GM23248 (cell line): ENCODE measurements at regions of chr12 and their contacts with region 1.

Region 1: GRCh38 chr12:50504798-50505385 is at the start of gene DIP2B:
- DNase-seq: peak; percentile 96
- H3K4me3 ChIP-seq: peak within 1 kb of the TSS; percentile 83
- H3K27ac ChIP-seq: peak within 1 kb of the TSS; percentile 67
- H3K4me1 ChIP-seq: peaks cover 23% of the 10 kb centered on the region
- H3K27me3 ChIP-seq: no peaks in the 10 kb centered on the region
- total RNA-seq, gene DIP2B: 17.9 and 19.5 TPM in 2 replicates

Region 2: GRCh38 chr12:50132505-50133135 is 372.3 kb before region 1 on chr12:
- in situ Hi-C with region 1: no loop called
- DNase-seq: peak; percentile 59
- H3K4me3 ChIP-seq: no peak overlapping the region
- H3K27ac ChIP-seq: no peak overlapping the region
- H3K4me1 ChIP-seq: peaks cover 8% of the 10 kb centered on the region; the same call in 1 of the 2 replicates
- H3K27me3 ChIP-seq: no peaks in the 10 kb centered on the region

Region 3: GRCh38 chr12:50271280-50272247 is 233.3 kb before region 1 on chr12:
- in situ Hi-C with region 1: no loop called
- DNase-seq: peak; percentile 55
- H3K4me3 ChIP-seq: peak overlapping the region; percentile 54
- H3K27ac ChIP-seq: peak overlapping the region; percentile 52
- H3K4me1 ChIP-seq: peaks cover 12% of the 10 kb centered on the region
- H3K27me3 ChIP-seq: no peaks in the 10 kb centered on the region

Region 4: DNA sequence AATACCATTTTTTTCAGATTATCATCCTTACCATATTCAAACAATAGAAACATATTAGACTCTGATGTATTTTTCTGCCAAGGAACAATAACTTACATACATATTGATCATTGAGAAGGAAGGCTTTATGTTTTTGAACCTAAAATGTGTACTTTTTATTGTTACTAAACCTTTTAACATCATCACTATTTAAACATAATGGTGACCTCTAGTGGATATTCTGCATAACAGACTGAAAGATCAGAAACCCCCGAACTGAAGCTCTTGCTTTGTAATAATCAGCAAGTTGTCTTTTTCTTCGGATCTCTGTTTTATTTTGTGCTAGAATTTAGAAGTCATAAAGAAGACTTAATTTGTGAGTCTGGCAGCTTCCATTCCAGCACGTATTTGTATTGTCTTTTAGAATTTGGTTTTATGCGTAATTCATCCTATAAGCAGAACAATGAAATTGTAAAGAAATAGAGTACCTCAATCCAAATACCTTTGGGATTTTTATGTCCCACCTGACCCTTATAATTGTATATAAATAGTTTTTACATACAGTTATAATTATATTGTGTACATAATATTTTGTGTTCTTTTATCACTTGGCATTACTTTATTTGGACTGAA is 133.1 kb after region 1 on chr12:
- in situ Hi-C with region 1: loop called (anchors 10 kb)
- DNase-seq: peak; percentile 77
- H3K4me3 ChIP-seq: no peak overlapping the region
- H3K27ac ChIP-seq: no peak overlapping the region
- H3K4me1 ChIP-seq: peaks cover 29% of the 10 kb centered on the region
- H3K27me3 ChIP-seq: no peaks in the 10 kb centered on the region